Heart right ventricle (tissue), 16 donors: ENCODE measurements at regions of chr15 and their contacts with region 1.

Region 1: DNA sequence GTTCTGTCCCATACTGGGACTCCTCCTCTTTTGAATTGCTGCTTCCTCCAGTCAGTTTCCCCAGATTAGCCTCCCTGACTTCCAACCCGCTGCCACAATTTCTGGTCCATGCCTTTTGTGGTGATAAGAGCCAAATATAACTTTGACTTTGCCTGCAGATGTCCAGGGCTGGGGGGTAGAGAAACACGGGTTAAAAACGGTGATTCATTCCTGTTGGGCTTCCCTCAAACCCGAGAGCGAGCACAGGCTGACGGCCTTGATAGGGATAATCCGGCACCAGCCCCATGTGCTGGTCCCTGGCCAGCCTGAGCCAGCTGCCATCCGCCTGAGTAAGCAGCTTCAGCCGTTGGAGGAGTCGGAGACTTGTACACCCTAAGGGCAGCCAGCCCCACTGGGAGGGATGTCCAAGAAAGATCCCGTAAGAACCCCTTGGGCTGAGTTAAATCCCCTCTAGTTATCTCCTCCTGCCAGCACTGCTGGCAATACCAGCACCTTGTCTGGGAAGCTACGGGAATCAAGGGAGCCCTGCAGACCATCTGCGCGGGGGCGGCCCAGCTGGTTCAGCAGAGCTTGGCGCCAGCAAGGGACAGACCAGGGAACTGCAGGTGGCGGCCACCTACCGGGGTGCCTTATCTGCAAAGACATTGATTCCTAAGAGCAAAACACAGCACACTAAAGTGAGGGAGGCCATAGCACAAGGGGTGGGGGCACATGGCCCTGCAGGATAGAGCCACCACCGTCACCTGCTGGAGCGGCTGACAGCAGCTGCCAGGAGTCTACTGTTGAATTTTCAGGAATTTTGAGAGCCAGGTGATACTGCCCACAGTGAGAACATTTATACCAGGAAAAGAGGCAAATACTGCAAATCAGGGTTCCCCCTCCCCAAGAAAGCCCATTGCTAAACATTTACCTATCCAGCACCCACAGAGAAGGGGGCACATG is 18.1 kb downstream of the CSPG4 start:
- DNase-seq: peak; percentile 75 to 77
- ATAC-seq: peak; percentile 71 to 91 (median 83)
- H3K4me3 ChIP-seq: peak overlapping the region in 2 of 10 donors; percentile 6 to 17
- H3K27ac ChIP-seq: peak overlapping the region in 9 of 10 donors; percentile 31 to 82 (median 74)
- H3K4me1 ChIP-seq: peaks cover 18 to 65% (median 43%) of the 10 kb centered on the region in 9 donors
- H3K27me3 ChIP-seq: peaks cover 0 to 57% (median 0%) of the 10 kb centered on the region in 7 donors
- CTCF ChIP-seq: peak in 7 of 9 donors; percentile 21 to 56 (median 43)

Region 2: GRCh38 chr15:75554717-75555116 is 139.8 kb before region 1 on chr15:
- intact Hi-C with region 1: no loop called
- DNase-seq: no peak
- ATAC-seq: peak in 1 of 8 donors; percentile 27
- H3K4me3 ChIP-seq: no peak overlapping the region
- H3K27ac ChIP-seq: no peak overlapping the region
- H3K4me1 ChIP-seq: peaks cover 0 to 35% (median 21%) of the 10 kb centered on the region in 9 donors
- H3K27me3 ChIP-seq: no peaks in the 10 kb centered on the region
- CTCF ChIP-seq: no peak

Region 3: DNA sequence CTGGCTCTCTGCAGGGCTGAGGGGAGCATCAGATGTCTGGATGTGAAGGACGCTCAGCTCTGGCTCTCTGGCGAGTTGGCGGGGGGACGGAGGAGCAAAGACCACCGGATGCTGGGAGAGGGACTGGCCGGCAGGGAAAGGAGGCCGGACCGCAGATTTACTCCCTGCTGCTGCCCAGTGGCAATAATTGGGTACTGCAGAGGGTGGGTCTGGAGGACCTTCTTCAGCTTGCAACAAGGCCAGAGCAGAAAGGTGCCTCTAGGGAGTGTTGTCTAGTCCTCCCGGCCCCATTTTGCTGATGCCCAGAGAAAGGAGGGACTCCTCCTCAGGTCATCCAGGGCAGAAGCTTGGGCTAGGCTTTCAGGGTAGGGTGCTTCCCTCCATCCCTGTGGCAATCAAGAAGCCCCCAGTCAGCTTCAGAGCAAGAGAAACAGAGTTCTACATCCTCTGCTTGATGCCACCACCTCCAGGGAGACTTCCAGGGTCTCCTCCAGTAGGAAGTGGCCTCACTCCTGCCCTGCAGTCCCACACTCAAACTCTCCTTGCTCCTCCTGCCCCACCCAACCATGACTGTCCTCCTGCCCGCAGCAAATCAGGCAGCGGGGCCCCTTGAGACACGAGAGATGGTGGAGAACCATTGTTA is 38.4 kb after region 1 on chr15:
- intact Hi-C with region 1: loop called in 6 of 10 experiments (anchors 5 to 10 kb)
- DNase-seq: peak; percentile 70 to 79
- ATAC-seq: peak; percentile 63 to 81 (median 71)
- H3K4me3 ChIP-seq: peak overlapping the region in 1 of 10 donors; percentile 8
- H3K27ac ChIP-seq: peak overlapping the region in 2 of 10 donors; percentile 31 to 55
- H3K4me1 ChIP-seq: peaks cover 10 to 42% (median 23%) of the 10 kb centered on the region in 9 donors
- H3K27me3 ChIP-seq: peaks cover 0 to 3% (median 0%) of the 10 kb centered on the region in 7 donors
- CTCF ChIP-seq: peak; percentile 78 to 94 (median 87)

Region 4: GRCh38 chr15:75801859-75802593 is 107.5 kb after region 1 on chr15:
- intact Hi-C with region 1: loop called in 4 of 10 experiments (anchors 5 kb)
- DNase-seq: peak; percentile 78 to 83
- ATAC-seq: peak; percentile 95 to 99 (median 97)
- H3K4me3 ChIP-seq: peak overlapping the region in 8 of 10 donors; percentile 11 to 38 (median 28)
- H3K27ac ChIP-seq: no peak overlapping the region
- H3K4me1 ChIP-seq: peaks cover 0 to 17% (median 5%) of the 10 kb centered on the region in 9 donors
- H3K27me3 ChIP-seq: peaks cover 0 to 42% (median 25%) of the 10 kb centered on the region in 7 donors
- CTCF ChIP-seq: peak; percentile 82 to 98 (median 93)